Activated T-helper 1 cell treated with anti-CD3 and anti-CD28 coated beads, Interleukin-12 subunit alpha, Interleukin-12 subunit beta, Interleukin-2, Interleukin-4 antibody, amounts not matched to agents 30 ng/mL and 10 ng/mL and 1 ng/mL, durations not matched to agents 14 hours and 24 hours and 36 hours (primary cell): ENCODE measurements at regions of chr14 and their contacts with region 1.

Region 1: DNA sequence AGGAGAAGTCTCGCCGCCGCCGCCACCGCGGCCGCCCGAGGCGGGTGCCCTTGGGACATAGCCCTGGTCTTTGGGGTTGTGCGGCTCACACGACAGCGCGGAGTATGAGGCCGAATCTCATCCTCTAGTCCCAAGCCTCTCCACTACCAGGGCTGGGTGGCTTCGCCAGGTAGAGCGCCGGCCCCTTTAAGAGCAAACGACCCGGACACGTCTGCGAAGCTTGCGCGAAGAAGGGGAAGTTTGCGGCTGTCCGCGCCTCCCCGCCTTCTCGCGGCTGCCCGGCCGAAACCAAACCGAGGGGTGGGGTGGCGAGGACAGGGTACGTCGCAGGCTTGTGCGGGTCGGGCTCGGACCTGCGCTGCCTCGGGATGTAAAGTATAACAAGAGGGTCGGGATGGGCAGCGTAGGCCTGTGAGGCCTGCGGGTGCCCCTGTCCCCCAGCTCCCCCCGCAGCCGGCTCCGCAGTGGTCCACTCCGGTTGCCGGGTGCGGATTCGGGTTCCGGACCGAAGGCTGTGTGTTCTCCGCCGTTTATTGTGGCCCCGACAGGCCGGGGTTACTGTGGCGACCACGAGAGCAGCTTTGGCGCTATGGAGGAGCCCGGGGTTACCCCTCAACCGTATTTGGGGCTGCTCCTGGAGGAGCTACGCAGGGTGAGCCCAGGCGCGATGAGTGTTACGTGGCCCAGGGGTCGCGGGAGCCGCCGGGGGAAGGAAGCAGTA is 33.3 kb downstream of the MIA2 start:
- DNase-seq: peak; percentile 76
- H3K4me3 Mint-ChIP-seq: peak overlapping the region; percentile 80
- H3K27ac Mint-ChIP-seq: peak overlapping the region; percentile 79
- H3K4me1 Mint-ChIP-seq: peaks cover 52% of the 10 kb centered on the region
- H3K27me3 Mint-ChIP-seq: no peaks in the 10 kb centered on the region

Region 2: GRCh38 chr14:38553586-38553985 is 713.4 kb before region 1 on chr14:
- intact Hi-C with region 1: no loop called
- DNase-seq: no peak
- H3K4me3 Mint-ChIP-seq: no peak overlapping the region
- H3K27ac Mint-ChIP-seq: no peak overlapping the region
- H3K4me1 Mint-ChIP-seq: no peaks in the 10 kb centered on the region
- H3K27me3 Mint-ChIP-seq: no peaks in the 10 kb centered on the region

Region 3: GRCh38 chr14:39251547-39251946 is 15.5 kb before region 1 on chr14:
- intact Hi-C with region 1: no loop called
- DNase-seq: no peak
- H3K4me3 Mint-ChIP-seq: no peak overlapping the region
- H3K27ac Mint-ChIP-seq: no peak overlapping the region
- H3K4me1 Mint-ChIP-seq: peaks cover 6% of the 10 kb centered on the region
- H3K27me3 Mint-ChIP-seq: peaks cover 9% of the 10 kb centered on the region

Region 4: GRCh38 chr14:39279515-39279914 is 12.5 kb after region 1 on chr14:
- intact Hi-C with region 1: loop called (anchors 1 kb)
- DNase-seq: no peak
- H3K4me3 Mint-ChIP-seq: no peak overlapping the region
- H3K27ac Mint-ChIP-seq: no peak overlapping the region
- H3K4me1 Mint-ChIP-seq: peaks cover 22% of the 10 kb centered on the region
- H3K27me3 Mint-ChIP-seq: no peaks in the 10 kb centered on the region